PC-3 (cell line): ENCODE measurements at regions of chr1 and their contacts with region 1.

Region 1: DNA sequence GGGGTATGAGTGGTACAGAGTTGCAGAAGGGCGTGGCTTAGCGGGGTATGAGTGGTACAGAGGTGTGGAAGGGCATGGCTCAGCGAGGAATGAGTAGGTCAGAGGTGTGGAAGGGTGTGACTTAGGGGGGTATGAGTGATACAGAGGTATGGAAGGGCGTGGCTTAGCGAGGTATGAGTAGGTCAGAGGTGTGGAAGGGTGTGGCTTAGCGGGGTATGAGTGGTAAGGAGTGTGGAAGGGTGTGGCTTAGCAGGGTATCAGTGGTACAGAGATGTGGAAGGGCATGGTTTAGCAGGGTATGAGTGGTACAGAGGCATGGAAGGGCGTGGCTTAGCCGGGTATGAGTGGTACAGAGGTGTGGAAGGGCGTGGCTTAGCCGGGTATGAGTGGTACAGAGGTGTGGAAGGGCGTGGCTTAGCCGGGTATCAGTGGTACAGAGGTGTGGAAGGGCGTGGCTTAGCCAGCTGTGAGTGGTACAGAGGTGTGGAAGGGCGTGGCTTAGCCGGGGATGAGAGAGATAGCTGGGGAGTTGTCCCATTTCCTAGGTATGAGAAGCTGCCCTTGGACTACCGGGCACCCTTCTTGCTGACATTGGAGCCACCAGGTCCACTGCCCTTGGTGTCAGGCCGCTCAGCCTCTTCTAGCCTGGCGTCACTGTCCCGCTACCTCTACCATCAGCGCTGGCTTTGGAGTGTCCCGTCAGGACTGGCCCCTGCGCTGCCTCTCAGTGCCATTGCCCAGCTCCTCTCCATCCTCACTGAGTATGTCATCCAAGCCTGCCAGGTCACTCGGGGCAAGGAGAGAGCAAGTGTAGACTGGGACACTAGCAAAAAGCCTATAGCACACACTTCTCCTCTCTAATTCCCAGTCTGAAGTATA is 29.8 kb downstream of the HYI start:
- DNase-seq: peak; percentile 79
- ATAC-seq: peak; percentile 75
- H3K4me3 ChIP-seq: no peak overlapping the region
- H3K27ac ChIP-seq: peak overlapping the region; percentile 73
- H3K4me1 ChIP-seq: peaks cover 15% of the 10 kb centered on the region; the same call in 1 of the 2 replicates
- H3K27me3 ChIP-seq: no peaks in the 10 kb centered on the region
- CTCF ChIP-seq: no peak

Region 2: DNA sequence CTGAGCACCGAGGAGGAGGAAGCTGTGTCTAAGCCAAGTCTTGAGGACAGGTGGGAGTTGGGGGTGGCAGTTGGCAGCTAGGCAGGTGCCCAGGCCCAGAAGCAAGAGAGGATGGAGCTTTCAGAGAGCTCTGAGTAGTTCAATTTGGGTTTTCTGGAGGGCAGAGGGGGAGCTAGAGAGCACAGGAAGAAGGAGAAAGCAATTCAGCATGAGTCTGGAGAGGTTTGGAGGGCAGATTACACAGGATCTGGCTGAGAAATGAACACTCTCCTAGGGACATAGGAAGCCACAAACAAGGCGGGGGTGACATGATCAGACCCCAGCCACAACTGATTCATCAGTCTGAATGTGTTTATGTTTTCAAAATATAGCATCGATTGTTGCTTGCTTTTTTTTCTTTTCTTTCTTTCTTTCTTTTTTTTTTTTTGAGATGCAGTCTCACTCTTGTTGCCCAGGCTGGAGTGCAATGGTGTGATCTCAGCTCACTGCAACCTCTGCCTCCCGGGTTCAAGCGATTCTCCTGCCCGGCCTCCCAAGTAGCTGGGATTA is 130.6 kb after region 1 on chr1:
- CTCF ChIA-PET with region 1: no interaction called
- POLR2A ChIA-PET with region 1: no interaction called
- intact Hi-C with region 1: no loop called
- DNase-seq: peak; percentile 62
- ATAC-seq: peak; percentile 39
- H3K4me3 ChIP-seq: no peak overlapping the region
- H3K27ac ChIP-seq: no peak overlapping the region
- H3K4me1 ChIP-seq: peaks cover 26% of the 10 kb centered on the region
- H3K27me3 ChIP-seq: no peaks in the 10 kb centered on the region
- CTCF ChIP-seq: peak; percentile 71

Region 3: GRCh38 chr1:43743206-43743605 is 319.3 kb after region 1 on chr1:
- CTCF ChIA-PET with region 1: no interaction called
- POLR2A ChIA-PET with region 1: interaction called, 10 read pairs
- intact Hi-C with region 1: no loop called
- DNase-seq: no peak
- ATAC-seq: no peak
- H3K4me3 ChIP-seq: no peak overlapping the region
- H3K27ac ChIP-seq: no peak overlapping the region
- H3K4me1 ChIP-seq: peaks cover 4% of the 10 kb centered on the region
- H3K27me3 ChIP-seq: no peaks in the 10 kb centered on the region
- CTCF ChIP-seq: no peak